ENCODE measurements at regions of chr15 and their contacts with region 1.

Region 1: DNA sequence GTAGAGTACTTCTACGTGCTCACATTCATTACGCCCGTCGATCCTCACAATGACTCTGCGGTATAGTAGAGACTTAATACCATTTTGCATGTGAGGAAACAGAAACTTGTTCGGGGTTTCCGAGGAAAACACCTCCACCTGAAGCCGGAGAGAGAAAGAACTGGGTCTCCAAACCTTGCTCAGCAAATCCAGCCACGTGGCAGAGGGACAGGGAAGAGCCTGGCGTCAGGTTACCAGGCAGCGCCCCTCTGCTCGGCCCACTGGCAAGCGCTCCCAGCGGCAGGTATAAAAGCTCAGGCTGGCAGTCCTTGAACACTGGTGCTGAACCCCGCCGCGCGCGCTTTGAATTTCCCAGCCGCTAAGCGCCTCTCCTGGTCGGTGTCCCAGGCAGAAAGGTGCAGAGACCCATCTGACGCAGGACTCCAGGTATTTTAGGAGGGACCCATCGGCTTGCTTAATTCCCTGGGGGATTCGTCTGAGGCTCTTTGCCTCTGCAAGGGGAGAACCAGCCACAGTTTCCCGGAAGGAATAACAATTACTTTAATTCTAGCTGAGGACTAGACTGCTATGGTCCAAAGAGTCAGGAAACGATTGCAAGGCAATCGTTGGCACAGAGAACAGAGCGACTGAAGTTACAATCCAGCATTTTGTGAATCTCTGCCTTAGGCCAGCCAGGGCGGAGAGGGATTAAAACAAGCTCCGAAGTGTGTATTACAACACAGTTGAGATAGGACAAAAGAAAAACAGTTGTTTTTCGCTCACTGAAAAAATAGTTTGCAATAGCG is at the start of gene C2CD4A:
- DNase-seq: peak; percentile 71
- ATAC-seq: peak; percentile 64
- H3K4me3 ChIP-seq: peak within 1 kb of the TSS; percentile 21 to 66 (median 46)
- H3K4me3 Mint-ChIP-seq: peak within 1 kb of the TSS; percentile 82
- H3K27ac ChIP-seq: no peak within 1 kb of the TSS
- H3K27ac Mint-ChIP-seq: no peak within 1 kb of the TSS
- H3K4me1 ChIP-seq: peaks cover 21 to 22% of the 10 kb centered on the region in 2 donors
- H3K4me1 Mint-ChIP-seq: peaks cover 24% of the 10 kb centered on the region
- H3K27me3 ChIP-seq: peaks cover 1 to 35% (median 27%) of the 10 kb centered on the region in 4 experiments
- H3K27me3 Mint-ChIP-seq: peaks cover 36% of the 10 kb centered on the region
- CTCF ChIP-seq: no peak
- total RNA-seq, gene C2CD4A: not detected in 2 replicates

Region 2: DNA sequence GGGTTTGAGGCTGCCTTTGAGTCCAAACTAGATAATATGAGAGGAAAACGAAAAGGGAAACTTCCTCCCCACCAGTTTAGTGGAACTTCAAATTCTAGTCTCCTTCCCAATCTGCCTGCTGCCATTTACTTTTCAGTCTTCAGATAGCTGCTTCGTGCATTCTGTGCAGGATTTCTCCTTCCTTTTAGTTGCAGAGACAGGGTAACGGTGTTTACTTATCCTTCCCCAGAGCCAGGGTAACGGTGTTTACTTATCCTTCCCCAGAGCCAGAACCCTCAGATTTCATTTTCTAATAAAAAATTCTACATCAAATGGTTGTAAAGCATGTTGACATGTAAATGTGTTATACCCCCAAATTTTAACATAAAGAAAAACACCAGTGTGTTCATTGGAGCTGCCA is 289.2 kb before region 1 on chr15:
- CTCF ChIA-PET with region 1: no interaction called
- POLR2A ChIA-PET with region 1: no interaction called
- intact Hi-C with region 1: no loop called
- DNase-seq: no peak
- ATAC-seq: no peak
- H3K4me3 ChIP-seq: no peak overlapping the region
- H3K4me3 Mint-ChIP-seq: no peak overlapping the region
- H3K27ac ChIP-seq: no peak overlapping the region
- H3K27ac Mint-ChIP-seq: no peak overlapping the region
- H3K4me1 ChIP-seq: no peaks in the 10 kb centered on the region
- H3K4me1 Mint-ChIP-seq: no peaks in the 10 kb centered on the region
- H3K27me3 ChIP-seq: peaks cover 0 to 11% (median 2%) of the 10 kb centered on the region in 4 experiments
- H3K27me3 Mint-ChIP-seq: peaks cover 27% of the 10 kb centered on the region
- CTCF ChIP-seq: no peak

Region 3: DNA sequence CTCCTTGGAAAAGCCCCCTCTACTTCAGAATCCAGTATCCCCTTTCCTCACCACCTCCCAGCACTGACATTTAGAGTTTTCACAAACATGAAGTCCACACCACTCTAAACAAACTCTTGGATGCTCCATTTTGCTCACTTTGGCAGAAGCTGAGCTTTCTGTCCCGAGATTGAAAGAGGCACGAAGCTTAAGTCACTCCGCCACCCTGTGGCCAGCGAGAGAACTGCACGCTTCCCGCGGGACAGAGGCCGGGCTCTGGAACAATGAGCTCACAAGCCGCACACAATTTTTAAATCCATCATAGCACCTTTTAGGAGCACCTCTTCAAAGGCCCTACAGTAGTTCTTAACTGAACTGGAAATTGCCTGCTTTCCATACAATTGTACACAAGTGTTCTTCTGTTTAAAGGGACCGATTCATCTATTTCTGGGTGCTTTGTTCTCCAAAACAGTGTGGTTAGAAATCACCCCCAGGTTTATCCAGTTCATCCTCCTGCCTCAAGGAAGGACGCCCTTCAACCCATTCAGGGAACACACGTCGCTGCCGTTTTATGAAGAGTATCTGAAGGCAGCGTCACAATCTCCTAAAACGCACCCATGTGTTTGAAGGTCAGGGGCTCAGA is 232.7 kb before region 1 on chr15:
- CTCF ChIA-PET with region 1: interaction called, 10 read pairs
- POLR2A ChIA-PET with region 1: no interaction called
- intact Hi-C with region 1: no loop called
- DNase-seq: peak; percentile 72
- ATAC-seq: peak; percentile 83
- H3K4me3 ChIP-seq: no peak overlapping the region
- H3K4me3 Mint-ChIP-seq: no peak overlapping the region
- H3K27ac ChIP-seq: no peak overlapping the region
- H3K27ac Mint-ChIP-seq: no peak overlapping the region
- H3K4me1 ChIP-seq: peaks cover 0 to 7% of the 10 kb centered on the region in 2 donors
- H3K4me1 Mint-ChIP-seq: peaks cover 4% of the 10 kb centered on the region
- H3K27me3 ChIP-seq: peaks cover 0 to 24% (median 4%) of the 10 kb centered on the region in 4 experiments
- H3K27me3 Mint-ChIP-seq: peaks cover 45% of the 10 kb centered on the region
- CTCF ChIP-seq: peak; percentile 95

Region 4: DNA sequence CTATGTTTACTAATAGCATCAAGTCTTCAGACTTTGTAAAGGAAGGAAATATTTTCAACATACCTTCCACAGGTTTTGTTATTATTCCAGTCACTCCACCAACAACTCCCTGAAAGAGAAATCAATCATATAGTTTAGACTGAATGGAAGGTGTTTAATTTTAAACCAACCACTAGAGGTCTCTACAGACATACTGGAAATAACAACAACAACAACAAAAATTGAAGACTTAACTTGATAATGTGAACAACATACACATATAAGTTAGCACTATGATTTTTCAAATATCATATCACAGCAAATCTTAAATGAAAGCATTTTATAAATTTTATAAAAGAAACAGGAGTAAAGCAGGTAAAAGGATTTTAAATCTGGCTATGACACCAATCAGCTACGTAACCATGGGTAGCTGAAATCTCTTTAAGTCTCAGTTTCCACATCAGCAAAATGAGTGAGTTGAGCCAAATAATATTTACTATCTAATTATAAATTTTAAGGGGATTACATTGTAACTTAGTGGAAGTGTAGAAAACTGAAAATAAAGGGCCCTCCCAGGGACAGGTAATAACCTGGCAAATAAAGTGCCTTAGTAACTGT is 194.8 kb before region 1 on chr15:
- CTCF ChIA-PET with region 1: interaction called, 5 read pairs
- POLR2A ChIA-PET with region 1: no interaction called
- intact Hi-C with region 1: loop called (anchors 1 kb)
- DNase-seq: peak; percentile 15
- ATAC-seq: no peak
- H3K4me3 ChIP-seq: no peak overlapping the region
- H3K4me3 Mint-ChIP-seq: no peak overlapping the region
- H3K27ac ChIP-seq: no peak overlapping the region
- H3K27ac Mint-ChIP-seq: no peak overlapping the region
- H3K4me1 ChIP-seq: no peaks in the 10 kb centered on the region
- H3K4me1 Mint-ChIP-seq: peaks cover 3% of the 10 kb centered on the region
- H3K27me3 ChIP-seq: no peaks in the 10 kb centered on the region
- H3K27me3 Mint-ChIP-seq: no peaks in the 10 kb centered on the region
- CTCF ChIP-seq: peak; percentile 71

Region 5: DNA sequence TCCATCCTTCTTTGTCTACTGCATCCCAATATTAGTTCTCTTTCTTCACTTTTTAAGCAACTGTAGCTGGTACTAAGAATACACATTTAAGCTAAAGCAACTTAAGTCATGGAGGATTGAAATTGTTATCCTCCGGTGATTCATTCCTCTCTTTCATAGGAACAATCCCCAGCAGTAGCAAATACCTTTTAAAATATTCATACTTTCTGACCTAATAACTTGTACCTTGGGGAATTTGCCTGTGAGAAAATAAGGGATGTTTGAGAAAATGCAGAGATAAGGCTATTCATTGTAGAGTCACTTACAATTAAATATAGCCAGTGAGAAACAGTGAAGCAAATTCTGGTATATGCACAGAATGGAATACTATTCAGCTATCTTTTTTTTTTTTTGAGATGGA is 72.6 kb before region 1 on chr15:
- CTCF ChIA-PET with region 1: no interaction called
- POLR2A ChIA-PET with region 1: no interaction called
- intact Hi-C with region 1: loop called (anchors 5 kb)
- DNase-seq: no peak
- ATAC-seq: no peak
- H3K4me3 ChIP-seq: no peak overlapping the region
- H3K4me3 Mint-ChIP-seq: no peak overlapping the region
- H3K27ac ChIP-seq: no peak overlapping the region
- H3K27ac Mint-ChIP-seq: no peak overlapping the region
- H3K4me1 ChIP-seq: no peaks in the 10 kb centered on the region
- H3K4me1 Mint-ChIP-seq: no peaks in the 10 kb centered on the region
- H3K27me3 ChIP-seq: no peaks in the 10 kb centered on the region
- H3K27me3 Mint-ChIP-seq: no peaks in the 10 kb centered on the region
- CTCF ChIP-seq: no peak

Region 6: DNA sequence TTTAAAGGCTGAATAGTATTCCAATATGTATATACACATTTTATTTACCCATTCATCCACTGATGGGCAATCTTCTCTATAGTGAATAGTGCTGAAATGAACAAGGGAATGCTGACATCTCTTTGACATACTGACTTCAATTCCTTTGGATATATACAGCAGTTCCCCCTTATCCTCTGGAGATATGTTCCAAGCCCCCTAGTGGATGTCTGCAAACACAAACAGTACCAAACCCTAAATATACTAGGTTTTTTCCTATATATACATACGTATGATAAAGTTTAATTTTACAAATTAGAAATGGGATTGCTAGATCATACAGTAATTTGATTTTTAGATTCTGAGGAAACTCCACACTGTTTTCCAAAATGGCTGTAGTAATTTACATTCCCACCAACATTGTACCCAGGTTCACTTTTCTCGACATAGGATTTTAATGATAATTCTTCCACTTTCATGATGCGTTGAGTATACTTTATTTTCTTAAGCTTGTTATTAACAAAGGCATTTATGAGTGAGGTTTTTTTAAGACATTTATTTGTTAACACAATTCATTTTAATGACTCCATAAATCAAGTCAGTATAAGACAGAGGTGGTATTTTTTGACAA is 44.8 kb before region 1 on chr15:
- CTCF ChIA-PET with region 1: interaction called, 37 read pairs
- POLR2A ChIA-PET with region 1: no interaction called
- intact Hi-C with region 1: no loop called
- DNase-seq: no peak
- ATAC-seq: no peak
- H3K4me3 ChIP-seq: no peak overlapping the region
- H3K4me3 Mint-ChIP-seq: no peak overlapping the region
- H3K27ac ChIP-seq: no peak overlapping the region
- H3K27ac Mint-ChIP-seq: no peak overlapping the region
- H3K4me1 ChIP-seq: peaks cover 0 to 7% of the 10 kb centered on the region in 2 donors
- H3K4me1 Mint-ChIP-seq: peaks cover 12% of the 10 kb centered on the region
- H3K27me3 ChIP-seq: no peaks in the 10 kb centered on the region
- H3K27me3 Mint-ChIP-seq: no peaks in the 10 kb centered on the region
- CTCF ChIP-seq: peak; percentile 34

Region 7: GRCh38 chr15:63277038-63277892 is 1210.4 kb after region 1 on chr15 and contains the start of gene APH1B:
- CTCF ChIA-PET with region 1: no interaction called
- POLR2A ChIA-PET with region 1: no interaction called
- intact Hi-C with region 1: loop called (anchors 5 kb)
- DNase-seq: peak; percentile 85
- ATAC-seq: peak; percentile 97
- H3K4me3 ChIP-seq: peak within 1 kb of the TSS; percentile 74 to 98 (median 94)
- H3K4me3 Mint-ChIP-seq: peak within 1 kb of the TSS; percentile 92
- H3K27ac ChIP-seq: peak within 1 kb of the TSS; percentile 67 to 79
- H3K27ac Mint-ChIP-seq: peak within 1 kb of the TSS; percentile 94
- H3K4me1 ChIP-seq: peaks cover 12 to 14% of the 10 kb centered on the region in 2 donors
- H3K4me1 Mint-ChIP-seq: peaks cover 19% of the 10 kb centered on the region
- H3K27me3 ChIP-seq: no peaks in the 10 kb centered on the region
- H3K27me3 Mint-ChIP-seq: no peaks in the 10 kb centered on the region
- CTCF ChIP-seq: no peak
- total RNA-seq, gene APH1B: 45.2 and 47.0 TPM in 2 replicates

Measured in B cell (primary cell).